CD4-positive, alpha-beta T cell (primary cell): ENCODE measurements at regions of chr4 and their contacts with region 1.

Region 1: DNA sequence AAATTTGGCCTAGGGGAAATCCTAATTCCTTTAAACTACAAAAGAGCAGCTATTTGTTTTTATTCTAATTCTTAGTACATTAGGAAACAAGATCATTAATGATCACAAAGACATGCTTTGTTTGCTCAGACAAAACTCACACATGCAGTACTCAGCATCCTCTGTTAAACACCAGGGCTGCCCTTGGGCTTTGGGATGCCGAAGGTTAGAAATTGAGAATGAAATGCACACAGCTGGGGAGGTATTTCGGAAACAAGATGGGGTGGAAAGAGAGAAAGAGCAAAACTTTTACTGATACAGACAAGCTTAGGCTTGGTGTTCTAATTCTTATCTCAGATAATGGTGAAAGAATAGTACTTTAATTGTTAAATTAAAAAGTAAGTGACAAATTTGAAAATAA is 222.6 kb downstream of the DCTD start:
- DNase-seq: no peak
- ATAC-seq: no peak
- H3K4me3 ChIP-seq: no peak overlapping the region
- H3K4me3 Mint-ChIP-seq: no peak overlapping the region
- H3K27ac ChIP-seq: no peak overlapping the region
- H3K27ac Mint-ChIP-seq: no peak overlapping the region
- H3K4me1 ChIP-seq: no peaks in the 10 kb centered on the region
- H3K4me1 Mint-ChIP-seq: no peaks in the 10 kb centered on the region
- H3K27me3 ChIP-seq: no peaks in the 10 kb centered on the region
- H3K27me3 Mint-ChIP-seq: peaks cover 26% of the 10 kb centered on the region
- CTCF ChIP-seq: no peak

Region 2: DNA sequence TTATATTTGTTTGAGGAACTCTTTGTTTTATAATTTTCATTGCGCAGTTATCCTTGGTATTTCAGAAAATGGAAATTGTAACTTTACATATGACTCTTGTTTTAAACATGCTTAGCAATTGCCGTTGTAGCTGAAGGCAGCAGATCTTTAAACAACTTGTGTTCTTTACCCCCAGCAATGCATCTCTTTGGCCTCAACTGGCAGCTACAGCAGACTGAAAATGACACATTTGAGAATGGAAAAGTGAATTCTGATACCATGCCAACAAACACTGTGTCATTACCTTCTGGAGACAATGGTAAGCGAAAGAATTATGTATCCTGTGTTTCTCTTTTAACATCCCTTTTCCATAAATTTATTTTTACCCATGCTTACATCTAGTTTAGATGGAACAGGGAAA is 41.0 kb before region 1 on chr4:
- CTCF ChIA-PET with region 1: no interaction called
- POLR2A ChIA-PET with region 1: no interaction called
- intact Hi-C with region 1: no loop called
- DNase-seq: no peak
- ATAC-seq: no peak
- H3K4me3 ChIP-seq: no peak overlapping the region
- H3K4me3 Mint-ChIP-seq: no peak overlapping the region
- H3K27ac ChIP-seq: no peak overlapping the region
- H3K27ac Mint-ChIP-seq: no peak overlapping the region
- H3K4me1 ChIP-seq: no peaks in the 10 kb centered on the region
- H3K4me1 Mint-ChIP-seq: no peaks in the 10 kb centered on the region
- H3K27me3 ChIP-seq: no peaks in the 10 kb centered on the region
- H3K27me3 Mint-ChIP-seq: peaks cover 17% of the 10 kb centered on the region
- CTCF ChIP-seq: no peak

Region 3: DNA sequence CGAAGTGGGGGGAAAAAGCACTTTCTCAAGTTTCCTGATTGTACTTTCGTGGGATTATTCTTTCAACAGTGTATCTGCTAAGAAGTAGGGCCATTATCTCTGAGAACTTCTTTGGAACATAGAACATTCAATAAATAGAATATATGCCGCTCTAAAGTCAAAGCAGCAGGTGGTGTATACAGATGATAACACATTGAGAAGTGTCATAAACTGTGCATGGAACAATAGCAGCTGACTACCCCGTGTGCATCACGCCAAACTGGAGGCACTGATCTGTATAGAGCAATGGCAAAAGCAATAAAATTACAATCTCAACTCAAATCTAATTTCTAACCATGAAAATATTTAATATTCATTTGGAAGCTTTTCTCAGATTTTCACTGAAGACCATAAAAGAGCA is 47.4 kb after region 1 on chr4:
- CTCF ChIA-PET with region 1: no interaction called
- POLR2A ChIA-PET with region 1: no interaction called
- intact Hi-C with region 1: loop called in 1 of 2 experiments (anchors 5 kb)
- DNase-seq: no peak
- ATAC-seq: no peak
- H3K4me3 ChIP-seq: no peak overlapping the region
- H3K4me3 Mint-ChIP-seq: no peak overlapping the region
- H3K27ac ChIP-seq: no peak overlapping the region
- H3K27ac Mint-ChIP-seq: no peak overlapping the region
- H3K4me1 ChIP-seq: no peaks in the 10 kb centered on the region
- H3K4me1 Mint-ChIP-seq: no peaks in the 10 kb centered on the region
- H3K27me3 ChIP-seq: no peaks in the 10 kb centered on the region
- H3K27me3 Mint-ChIP-seq: no peaks in the 10 kb centered on the region
- CTCF ChIP-seq: no peak

Region 4: DNA sequence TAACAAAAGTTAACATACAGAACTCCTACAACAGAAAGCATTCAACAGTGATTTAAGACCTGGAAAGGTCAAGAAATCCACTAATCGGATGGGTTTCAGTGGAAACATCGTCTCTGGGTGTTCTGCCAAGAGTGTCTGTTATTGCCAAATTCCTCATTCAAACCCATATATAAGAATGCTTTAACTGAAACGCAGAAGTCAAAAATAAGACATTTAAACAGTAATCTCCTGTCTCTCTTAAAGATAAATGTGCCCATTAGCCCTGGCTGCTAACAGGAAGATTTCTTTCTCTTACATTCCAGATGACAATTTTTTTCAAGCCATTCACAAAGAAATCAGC is 191.2 kb after region 1 on chr4:
- CTCF ChIA-PET with region 1: no interaction called
- POLR2A ChIA-PET with region 1: no interaction called
- intact Hi-C with region 1: no loop called
- DNase-seq: no peak
- ATAC-seq: no peak
- H3K4me3 ChIP-seq: no peak overlapping the region
- H3K4me3 Mint-ChIP-seq: no peak overlapping the region
- H3K27ac ChIP-seq: no peak overlapping the region
- H3K27ac Mint-ChIP-seq: no peak overlapping the region
- H3K4me1 ChIP-seq: no peaks in the 10 kb centered on the region
- H3K4me1 Mint-ChIP-seq: no peaks in the 10 kb centered on the region
- H3K27me3 ChIP-seq: no peaks in the 10 kb centered on the region
- H3K27me3 Mint-ChIP-seq: no peaks in the 10 kb centered on the region
- CTCF ChIP-seq: no peak

Region 5: GRCh38 chr4:183106839-183107238 is 412.3 kb after region 1 on chr4:
- CTCF ChIA-PET with region 1: no interaction called
- POLR2A ChIA-PET with region 1: no interaction called
- intact Hi-C with region 1: no loop called
- DNase-seq: no peak
- ATAC-seq: no peak
- H3K4me3 ChIP-seq: no peak overlapping the region
- H3K4me3 Mint-ChIP-seq: no peak overlapping the region
- H3K27ac ChIP-seq: no peak overlapping the region
- H3K27ac Mint-ChIP-seq: no peak overlapping the region
- H3K4me1 ChIP-seq: no peaks in the 10 kb centered on the region
- H3K4me1 Mint-ChIP-seq: no peaks in the 10 kb centered on the region
- H3K27me3 ChIP-seq: peaks cover 5 to 7% of the 10 kb centered on the region in 2 experiments
- H3K27me3 Mint-ChIP-seq: peaks cover 23% of the 10 kb centered on the region
- CTCF ChIP-seq: no peak